Activated T-helper 1 cell treated with anti-CD3 and anti-CD28 coated beads, Interleukin-12 subunit alpha, Interleukin-12 subunit beta, Interleukin-2, Interleukin-4 antibody, amounts not matched to agents 30 ng/mL and 10 ng/mL and 1 ng/mL, durations not matched to agents 14 hours and 24 hours and 36 hours (primary cell): ENCODE measurements at regions of chr10 and their contacts with region 1.

Region 1: DNA sequence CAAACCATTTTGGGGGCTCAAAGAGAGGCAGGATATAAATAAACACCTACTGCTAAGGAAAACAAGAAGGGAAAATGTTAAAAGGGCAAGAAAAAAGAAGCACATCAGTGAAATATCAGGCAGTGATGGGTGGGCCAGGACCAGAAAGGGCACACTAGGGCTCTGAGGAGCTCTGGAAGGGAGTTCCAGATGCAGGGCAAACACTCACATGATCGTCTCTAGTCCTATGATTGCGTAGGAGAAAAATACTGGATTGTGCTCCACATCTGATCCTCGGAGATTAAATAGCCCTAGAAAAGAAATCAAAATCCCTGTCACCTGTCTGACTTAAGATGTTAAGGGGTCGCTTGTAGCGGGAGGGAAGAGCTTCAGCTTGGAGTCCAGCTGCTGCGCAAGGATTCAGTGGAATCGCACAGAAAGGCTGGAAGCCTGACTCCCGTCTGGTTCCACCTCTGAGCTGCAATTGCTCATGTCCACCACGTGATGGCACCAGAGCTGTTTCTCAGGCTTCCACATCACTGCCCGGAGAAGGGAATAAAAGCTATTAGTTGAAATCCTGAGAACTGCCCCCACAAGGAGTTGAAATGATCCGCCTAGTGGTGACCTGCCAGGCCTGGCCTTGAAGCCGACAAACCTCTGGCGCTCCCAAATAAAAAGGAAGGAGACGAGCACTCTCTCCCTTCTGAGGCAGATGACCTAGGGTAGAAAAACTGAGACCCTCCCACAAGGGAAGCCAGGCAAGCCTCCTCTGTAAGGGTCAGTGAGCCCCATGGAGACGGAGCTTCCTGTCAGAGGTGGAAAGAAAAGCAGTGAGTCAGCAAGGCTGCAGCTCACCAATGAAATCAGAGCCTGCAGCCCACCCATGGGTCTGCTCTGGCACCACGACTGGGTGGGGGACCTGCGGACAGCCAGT is 39.2 kb downstream of the XPNPEP1 start:
- DNase-seq: peak; percentile 31
- H3K4me3 Mint-ChIP-seq: no peak overlapping the region
- H3K27ac Mint-ChIP-seq: no peak overlapping the region
- H3K4me1 Mint-ChIP-seq: peaks cover 21% of the 10 kb centered on the region
- H3K27me3 Mint-ChIP-seq: no peaks in the 10 kb centered on the region

Region 2: DNA sequence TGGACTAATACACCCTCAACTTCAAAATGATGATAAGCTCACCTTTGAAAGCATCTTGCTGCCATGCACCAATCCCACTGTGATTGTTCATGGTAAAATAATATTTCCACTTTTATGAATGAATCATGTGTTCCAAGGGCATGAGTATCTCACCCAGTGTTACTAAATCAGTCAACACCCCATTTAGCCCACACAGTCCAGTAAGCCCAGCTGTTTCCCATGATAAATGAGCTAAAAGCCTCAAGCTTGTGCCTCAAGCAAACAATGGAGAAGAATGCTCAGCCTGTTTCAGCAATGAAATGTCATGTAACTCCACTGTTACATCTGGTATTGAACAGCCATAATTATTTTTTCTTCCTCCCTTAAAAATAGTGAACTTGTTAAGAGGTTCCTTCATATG is 403.3 kb before region 1 on chr10:
- intact Hi-C with region 1: no loop called
- DNase-seq: no peak
- H3K4me3 Mint-ChIP-seq: no peak overlapping the region
- H3K27ac Mint-ChIP-seq: no peak overlapping the region
- H3K4me1 Mint-ChIP-seq: no peaks in the 10 kb centered on the region
- H3K27me3 Mint-ChIP-seq: no peaks in the 10 kb centered on the region

Region 3: GRCh38 chr10:109587366-109587765 is 296.7 kb before region 1 on chr10:
- intact Hi-C with region 1: no loop called
- DNase-seq: no peak
- H3K4me3 Mint-ChIP-seq: no peak overlapping the region
- H3K27ac Mint-ChIP-seq: no peak overlapping the region
- H3K4me1 Mint-ChIP-seq: no peaks in the 10 kb centered on the region
- H3K27me3 Mint-ChIP-seq: no peaks in the 10 kb centered on the region

Region 4: DNA sequence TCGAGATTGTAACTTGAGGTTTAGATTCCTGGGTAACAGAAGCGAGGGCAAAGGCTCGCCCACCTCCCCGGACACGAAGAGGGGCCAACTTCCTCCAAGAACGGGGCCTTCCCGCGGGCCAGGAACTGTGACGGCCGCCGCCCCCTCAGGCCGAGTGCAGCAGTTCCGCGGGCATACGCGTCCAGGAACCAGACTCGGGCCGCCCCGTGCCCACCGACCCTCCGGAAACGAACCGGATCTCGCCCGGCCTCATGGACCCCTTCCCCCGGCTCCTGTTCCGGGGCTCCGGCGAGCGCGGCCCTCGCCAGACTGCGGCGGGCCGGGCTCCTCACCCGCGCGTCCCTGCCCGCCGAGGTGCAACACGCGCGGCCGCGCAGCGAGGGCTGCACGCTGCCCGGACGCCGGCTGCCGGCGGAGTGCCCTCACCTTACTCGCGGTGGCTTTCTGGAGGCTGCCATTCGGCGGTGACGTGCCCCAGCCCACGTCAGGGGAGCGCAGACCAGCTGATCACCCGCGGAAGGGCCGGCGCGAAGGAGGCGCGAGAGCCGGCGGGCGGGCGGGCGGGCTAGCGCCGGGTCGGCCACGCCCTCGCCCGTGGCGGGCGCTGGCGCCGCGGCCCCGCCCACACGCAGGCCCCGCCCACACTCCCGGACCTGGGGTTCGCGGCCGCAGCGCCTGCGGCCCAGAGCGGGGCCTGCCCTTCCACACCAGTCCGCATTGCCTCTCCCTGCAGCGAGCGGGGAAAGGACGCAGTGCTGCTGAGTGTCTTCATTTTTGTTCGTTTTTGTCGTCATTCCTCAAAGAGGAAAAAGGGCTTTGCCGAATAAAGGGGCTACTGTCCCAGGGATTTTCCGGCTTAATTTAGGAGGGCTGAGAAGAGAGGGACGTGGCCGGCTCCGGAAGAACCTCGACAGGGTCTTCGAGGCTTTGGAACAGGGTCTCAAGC is 39.1 kb after region 1 on chr10 and contains the start of gene XPNPEP1:
- intact Hi-C with region 1: loop called (anchors 2 kb)
- DNase-seq: peak; percentile 81
- H3K4me3 Mint-ChIP-seq: peak within 1 kb of the TSS; percentile 94
- H3K27ac Mint-ChIP-seq: peak within 1 kb of the TSS; percentile 92
- H3K4me1 Mint-ChIP-seq: peaks cover 58% of the 10 kb centered on the region
- H3K27me3 Mint-ChIP-seq: peaks cover 5% of the 10 kb centered on the region
- total RNA-seq, gene XPNPEP1: 85.1 and 93.2 TPM in 2 replicates

Region 5: GRCh38 chr10:109956454-109957091 is 72.5 kb after region 1 on chr10:
- intact Hi-C with region 1: loop called (anchors 1 kb)
- DNase-seq: no peak
- H3K4me3 Mint-ChIP-seq: no peak overlapping the region
- H3K27ac Mint-ChIP-seq: no peak overlapping the region
- H3K4me1 Mint-ChIP-seq: peaks cover 16% of the 10 kb centered on the region
- H3K27me3 Mint-ChIP-seq: peaks cover 10% of the 10 kb centered on the region

Region 6: GRCh38 chr10:109978481-109978880 is 94.4 kb after region 1 on chr10:
- intact Hi-C with region 1: loop called (anchors 1 kb)
- DNase-seq: peak; percentile 26
- H3K4me3 Mint-ChIP-seq: no peak overlapping the region
- H3K27ac Mint-ChIP-seq: no peak overlapping the region
- H3K4me1 Mint-ChIP-seq: peaks cover 8% of the 10 kb centered on the region
- H3K27me3 Mint-ChIP-seq: peaks cover 7% of the 10 kb centered on the region

Region 7: GRCh38 chr10:110137142-110137545 is 253.0 kb after region 1 on chr10:
- intact Hi-C with region 1: loop called (anchors 1 kb)
- DNase-seq: no peak
- H3K4me3 Mint-ChIP-seq: no peak overlapping the region
- H3K27ac Mint-ChIP-seq: peak overlapping the region; percentile 1
- H3K4me1 Mint-ChIP-seq: peaks cover 33% of the 10 kb centered on the region
- H3K27me3 Mint-ChIP-seq: no peaks in the 10 kb centered on the region

Region 8: DNA sequence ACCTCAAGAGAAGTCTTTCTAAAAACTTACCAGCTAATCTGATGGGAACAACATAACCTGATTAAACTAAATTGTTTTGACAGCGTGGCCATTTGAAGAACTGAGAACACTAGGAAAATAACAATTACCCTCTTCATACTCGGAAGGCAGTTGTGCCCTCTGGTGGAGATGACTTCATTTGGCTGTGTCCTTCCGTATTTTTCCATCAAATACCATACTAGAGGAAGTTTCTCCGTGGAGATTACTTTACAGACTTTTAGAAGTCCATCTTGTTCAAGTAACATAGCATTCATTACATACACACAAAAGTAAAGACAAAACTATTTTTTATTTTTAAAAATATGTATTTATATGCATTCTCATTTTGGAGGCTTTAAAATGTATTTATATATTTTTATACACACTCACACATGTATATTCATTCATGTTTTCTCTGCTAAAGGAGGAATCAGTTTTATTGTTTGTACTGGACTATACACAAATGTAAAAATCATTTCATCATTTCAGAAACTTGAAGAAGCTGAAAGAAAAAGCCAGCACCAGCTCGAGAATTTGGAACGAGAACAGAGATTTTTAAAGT is 395.4 kb after region 1 on chr10:
- intact Hi-C with region 1: loop called (anchors 5 kb)
- DNase-seq: peak; percentile 18
- H3K4me3 Mint-ChIP-seq: no peak overlapping the region
- H3K27ac Mint-ChIP-seq: no peak overlapping the region
- H3K4me1 Mint-ChIP-seq: peaks cover 20% of the 10 kb centered on the region
- H3K27me3 Mint-ChIP-seq: peaks cover 14% of the 10 kb centered on the region